ENCODE measurements at regions of chr6 and their contacts with region 1.

Region 1: DNA sequence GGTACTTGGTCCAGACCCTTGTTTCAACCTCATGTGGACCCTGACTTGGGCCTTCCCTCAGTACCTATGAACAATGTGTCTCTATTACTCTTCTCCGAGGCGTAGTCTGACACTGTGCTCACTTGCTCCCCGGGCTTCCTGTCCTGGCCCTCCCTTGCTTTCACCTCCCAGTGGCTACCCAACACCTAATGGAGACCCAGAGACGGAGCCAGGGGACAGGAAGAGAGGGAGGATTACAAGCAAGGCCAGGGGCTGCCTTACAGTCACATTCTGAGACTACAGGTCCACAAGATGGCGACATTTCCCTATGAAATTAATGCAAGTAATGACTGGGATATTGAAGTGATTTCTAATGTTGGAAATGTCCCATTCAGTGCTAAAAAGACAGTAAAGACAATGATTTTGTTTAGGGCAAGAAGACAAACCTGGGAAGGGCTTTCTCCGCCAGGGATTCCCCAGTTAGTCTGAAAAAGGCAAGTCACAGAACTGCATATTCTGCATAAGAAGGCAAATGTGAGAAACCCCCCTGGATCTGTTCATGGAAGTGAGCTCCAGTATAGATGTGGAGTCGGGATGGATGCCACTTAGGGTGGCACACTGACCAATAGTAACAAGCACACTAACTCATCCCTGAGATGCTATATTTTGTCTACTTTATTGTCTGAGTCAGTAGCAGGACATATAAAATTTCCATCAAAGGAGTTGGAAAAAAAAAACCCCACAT is 44.0 kb upstream of the ZBTB24 start:
- DNase-seq: peak; percentile 44
- H3K4me3 ChIP-seq: no peak overlapping the region
- H3K27ac ChIP-seq: no peak overlapping the region
- H3K4me1 ChIP-seq: no peaks in the 10 kb centered on the region
- H3K27me3 ChIP-seq: peaks cover 4% of the 10 kb centered on the region
- CTCF ChIP-seq: peak; percentile 34 to 65

Region 2: DNA sequence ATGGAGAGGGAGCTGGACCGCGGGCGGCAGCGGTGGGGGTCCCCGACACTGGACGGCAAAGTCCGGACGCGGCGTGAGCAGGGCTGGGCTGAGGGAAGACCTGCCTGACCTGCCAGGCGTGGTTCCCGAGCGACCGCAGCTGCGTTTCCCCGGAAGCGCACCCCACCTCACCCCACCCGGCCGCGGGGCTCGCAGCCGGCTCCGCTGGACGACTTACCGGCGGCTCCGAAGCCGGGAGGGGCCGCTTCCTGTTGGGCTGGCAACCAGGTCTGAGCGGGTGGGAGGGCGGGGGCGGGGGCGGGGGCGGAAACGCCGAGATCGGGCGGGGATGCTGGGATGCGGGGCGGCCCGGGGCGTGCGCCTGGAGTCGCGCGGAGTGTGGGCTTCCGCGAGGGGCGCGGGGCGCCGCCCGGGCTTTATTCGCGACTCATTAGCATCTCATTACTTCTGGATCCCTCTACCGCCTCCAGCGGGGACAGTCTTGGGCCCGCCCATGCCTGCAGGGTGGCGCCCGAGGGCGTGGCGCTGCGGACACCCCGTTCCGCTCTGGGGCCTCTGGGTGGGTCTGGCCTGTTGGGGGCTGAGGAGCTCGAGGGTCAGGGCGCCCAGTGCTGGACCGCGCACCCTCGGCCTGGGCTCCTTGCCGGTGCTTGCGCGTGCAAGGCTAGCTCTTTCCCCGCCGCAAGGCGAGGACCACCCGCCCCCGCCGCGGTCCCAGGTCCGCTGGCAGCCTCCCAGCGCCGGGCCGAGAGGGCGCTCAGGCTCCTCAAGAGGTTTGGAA is 71.4 kb before region 1 on chr6 and contains the start of gene MICAL1:
- CTCF ChIA-PET with region 1: no interaction called
- dilution Hi-C with region 1: no loop called
- in situ Hi-C with region 1: no loop called
- intact Hi-C with region 1: no loop called
- DNase-seq: peak; percentile 38
- H3K4me3 ChIP-seq: peak within 1 kb of the TSS; percentile 78 to 96 (median 90)
- H3K27ac ChIP-seq: peak within 1 kb of the TSS; percentile 22
- H3K4me1 ChIP-seq: peaks cover 10% of the 10 kb centered on the region
- H3K27me3 ChIP-seq: no peaks in the 10 kb centered on the region
- CTCF ChIP-seq: peak in 1 of 2 donors; percentile 21
- total RNA-seq, gene MICAL1: 36.3 to 44.0 TPM

Region 3: GRCh38 chr6:109595998-109596397 is 68.9 kb after region 1 on chr6:
- CTCF ChIA-PET with region 1: no interaction called
- dilution Hi-C with region 1: no loop called
- in situ Hi-C with region 1: no loop called
- intact Hi-C with region 1: loop called (anchors 5 kb)
- DNase-seq: peak; percentile 12
- H3K4me3 ChIP-seq: no peak overlapping the region
- H3K27ac ChIP-seq: no peak overlapping the region
- H3K4me1 ChIP-seq: no peaks in the 10 kb centered on the region
- H3K27me3 ChIP-seq: no peaks in the 10 kb centered on the region
- CTCF ChIP-seq: peak; percentile 30 to 74

Region 4: DNA sequence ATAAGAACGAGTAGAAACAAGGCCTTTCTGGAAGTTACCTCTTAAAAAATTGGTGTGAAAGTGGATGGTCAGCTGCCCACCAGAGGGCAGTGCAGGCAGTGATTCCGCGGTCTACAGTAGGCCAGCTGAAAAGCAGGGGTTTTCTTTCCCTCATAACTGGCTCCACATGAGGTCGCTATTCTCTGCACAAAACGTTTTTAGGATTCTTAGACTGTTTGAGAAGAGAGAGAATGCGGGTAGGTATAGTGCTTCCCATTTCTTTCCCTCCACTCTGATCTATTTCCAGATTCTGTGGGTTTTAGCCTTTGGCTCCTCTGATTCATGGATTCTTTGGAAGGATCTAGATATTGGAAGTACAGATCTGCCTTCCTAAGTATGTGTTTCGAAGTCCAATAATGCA is 178.2 kb after region 1 on chr6:
- CTCF ChIA-PET with region 1: no interaction called
- dilution Hi-C with region 1: no loop called
- in situ Hi-C with region 1: no loop called
- intact Hi-C with region 1: loop called (anchors 1 kb)
- DNase-seq: peak; percentile 72
- H3K4me3 ChIP-seq: no peak overlapping the region
- H3K27ac ChIP-seq: no peak overlapping the region
- H3K4me1 ChIP-seq: no peaks in the 10 kb centered on the region
- H3K27me3 ChIP-seq: no peaks in the 10 kb centered on the region
- CTCF ChIP-seq: peak; percentile 96

Region 5: DNA sequence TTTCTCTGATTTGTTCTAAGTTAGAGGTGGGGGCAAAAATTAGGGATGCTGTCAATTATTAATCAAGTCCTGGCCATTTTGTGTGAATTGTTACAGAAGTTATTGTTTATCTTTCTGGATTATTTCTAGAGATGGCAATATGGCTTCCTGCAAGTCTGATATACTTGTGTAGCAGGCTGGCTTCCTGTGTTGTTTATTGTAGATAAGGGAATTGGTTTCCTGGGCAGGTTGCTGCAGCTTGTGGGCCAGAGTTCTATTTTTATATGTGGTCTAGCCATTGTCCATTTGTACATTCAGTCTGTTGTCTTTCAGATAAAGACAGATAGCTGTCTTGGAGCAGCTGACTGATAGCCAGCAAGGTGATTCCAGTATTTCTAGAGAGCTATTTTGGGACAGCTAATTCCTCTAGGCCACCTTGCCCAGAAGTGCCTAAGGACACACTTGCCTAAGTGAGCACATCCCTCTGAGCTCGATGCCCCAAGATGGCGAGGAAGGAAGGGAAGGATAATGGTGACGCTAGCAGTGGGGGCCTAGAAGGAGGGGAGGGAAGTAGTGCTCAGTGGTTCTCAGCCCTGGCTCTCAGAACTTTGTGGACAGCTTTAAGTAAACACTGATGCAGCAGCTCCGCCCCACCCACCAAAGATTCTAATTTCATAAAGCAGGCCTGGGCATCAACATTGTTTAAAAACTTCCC is 862.8 kb after region 1 on chr6:
- CTCF ChIA-PET with region 1: no interaction called
- dilution Hi-C with region 1: no loop called
- in situ Hi-C with region 1: loop called (anchors 10 to 25 kb)
- intact Hi-C with region 1: loop called (anchors 2 kb)
- DNase-seq: no peak
- H3K4me3 ChIP-seq: no peak overlapping the region
- H3K27ac ChIP-seq: no peak overlapping the region
- H3K4me1 ChIP-seq: no peaks in the 10 kb centered on the region
- H3K27me3 ChIP-seq: peaks cover 2% of the 10 kb centered on the region
- CTCF ChIP-seq: no peak

Measured in mammary epithelial cell (primary cell).